ENCODE measurements at regions of chr3 and their contacts with region 1.

Region 1: GRCh38 chr3:170089862-170090600 is 52.2 kb downstream of the GPR160 start:
- DNase-seq: no peak
- ATAC-seq: no peak
- H3K4me3 ChIP-seq: no peak overlapping the region
- H3K27ac ChIP-seq: no peak overlapping the region
- H3K4me1 ChIP-seq: no peaks in the 10 kb centered on the region
- H3K27me3 ChIP-seq: no peaks in the 10 kb centered on the region
- CTCF ChIP-seq: no peak
- POLR2A ChIP-seq: no peak

Region 2: DNA sequence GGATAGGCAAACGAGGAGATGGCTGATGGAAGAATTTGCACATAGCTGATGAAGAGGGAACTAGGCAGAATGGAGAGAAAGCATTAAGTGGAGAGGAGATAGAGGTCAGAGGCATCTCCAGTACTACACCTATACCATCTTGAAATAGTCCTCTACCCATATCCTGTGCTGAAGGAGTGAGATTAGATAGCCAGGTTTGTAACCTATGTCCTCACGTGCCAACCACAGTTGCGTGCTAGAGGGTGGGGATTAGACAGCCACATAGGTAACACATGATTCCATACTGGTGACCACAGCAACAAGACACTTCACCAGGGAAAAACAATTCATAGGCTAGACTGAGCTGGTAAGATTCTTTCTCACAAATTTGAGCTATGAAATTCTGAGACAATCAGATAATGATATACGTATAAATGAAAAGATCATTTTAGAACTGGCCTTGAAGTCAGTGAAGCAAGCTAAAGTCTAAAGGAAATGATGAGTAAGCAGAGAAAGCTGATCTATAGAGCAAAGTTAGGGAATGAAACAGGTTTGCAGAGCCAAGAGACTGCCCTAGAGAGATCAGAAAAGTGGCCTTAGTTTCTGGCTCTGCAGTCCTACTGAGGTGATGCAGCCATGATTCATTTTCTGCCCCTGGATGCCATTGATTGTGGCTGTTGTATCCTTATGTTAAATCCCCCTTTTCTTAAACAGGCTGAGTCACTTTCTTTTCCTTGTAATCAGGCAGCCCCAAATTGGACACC is 299.2 kb before region 1 on chr3:
- intact Hi-C with region 1: loop called in 1 of 10 experiments (anchors 5 kb)
- DNase-seq: no peak
- ATAC-seq: no peak
- H3K4me3 ChIP-seq: no peak overlapping the region
- H3K27ac ChIP-seq: no peak overlapping the region
- H3K4me1 ChIP-seq: no peaks in the 10 kb centered on the region
- H3K27me3 ChIP-seq: no peaks in the 10 kb centered on the region
- CTCF ChIP-seq: no peak
- POLR2A ChIP-seq: no peak

Measured in heart left ventricle (tissue), 16 donors.